ENCODE measurements at regions of chr10 and their contacts with region 1.

Region 1: GRCh38 chr10:21437770-21438382 is 87.6 kb downstream of the SKIDA1 start:
- DNase-seq: no peak
- H3K4me3 ChIP-seq: no peak overlapping the region
- H3K27ac ChIP-seq: no peak overlapping the region
- H3K4me1 ChIP-seq: no peaks in the 10 kb centered on the region
- H3K27me3 ChIP-seq: no peaks in the 10 kb centered on the region
- CTCF ChIP-seq: no peak
- POLR2A ChIP-seq: no peak

Region 2: GRCh38 chr10:21935439-21936023 is 497.7 kb after region 1 on chr10:
- intact Hi-C with region 1: loop called (anchors 5 kb)
- DNase-seq: no peak
- H3K4me3 ChIP-seq: no peak overlapping the region
- H3K27ac ChIP-seq: no peak overlapping the region
- H3K4me1 ChIP-seq: no peaks in the 10 kb centered on the region
- H3K27me3 ChIP-seq: no peaks in the 10 kb centered on the region
- CTCF ChIP-seq: no peak
- POLR2A ChIP-seq: no peak